ENCODE measurements at regions of chr11 and their contacts with region 1.

Region 1: GRCh38 chr11:19240420-19241259 is at the start of gene E2F8:
- DNase-seq: peak; percentile 95
- H3K4me3 Mint-ChIP-seq: peak within 1 kb of the TSS; percentile 88
- H3K27ac Mint-ChIP-seq: peak within 1 kb of the TSS; percentile 74
- H3K4me1 Mint-ChIP-seq: peaks cover 20% of the 10 kb centered on the region
- H3K27me3 Mint-ChIP-seq: peaks cover 31% of the 10 kb centered on the region
- total RNA-seq, gene E2F8: 16.0 to 16.5 TPM

Region 2: GRCh38 chr11:19116971-19117750 is 123.5 kb before region 1 on chr11 and contains the start of gene ZDHHC13:
- CTCF ChIA-PET with region 1: no interaction called
- POLR2A ChIA-PET with region 1: no interaction called
- intact Hi-C with region 1: loop called (anchors 1 kb)
- DNase-seq: peak; percentile 98
- H3K4me3 Mint-ChIP-seq: peak within 1 kb of the TSS; percentile 89
- H3K27ac Mint-ChIP-seq: peak within 1 kb of the TSS; percentile 67
- H3K4me1 Mint-ChIP-seq: peaks cover 45% of the 10 kb centered on the region
- H3K27me3 Mint-ChIP-seq: no peaks in the 10 kb centered on the region
- total RNA-seq, gene ZDHHC13: 25.4 to 26.8 TPM

Region 3: GRCh38 chr11:19187114-19187832 is 53.4 kb before region 1 on chr11:
- CTCF ChIA-PET with region 1: no interaction called
- POLR2A ChIA-PET with region 1: no interaction called
- intact Hi-C with region 1: no loop called
- DNase-seq: no peak
- H3K4me3 Mint-ChIP-seq: no peak overlapping the region
- H3K27ac Mint-ChIP-seq: no peak overlapping the region
- H3K4me1 Mint-ChIP-seq: no peaks in the 10 kb centered on the region
- H3K27me3 Mint-ChIP-seq: no peaks in the 10 kb centered on the region

Region 4: GRCh38 chr11:19259487-19260345 is 19.1 kb after region 1 on chr11:
- CTCF ChIA-PET with region 1: interaction called, 5 read pairs
- POLR2A ChIA-PET with region 1: no interaction called
- intact Hi-C with region 1: loop called (anchors 1 kb)
- DNase-seq: peak; percentile 76
- H3K4me3 Mint-ChIP-seq: no peak overlapping the region
- H3K27ac Mint-ChIP-seq: no peak overlapping the region
- H3K4me1 Mint-ChIP-seq: no peaks in the 10 kb centered on the region
- H3K27me3 Mint-ChIP-seq: no peaks in the 10 kb centered on the region

Region 5: DNA sequence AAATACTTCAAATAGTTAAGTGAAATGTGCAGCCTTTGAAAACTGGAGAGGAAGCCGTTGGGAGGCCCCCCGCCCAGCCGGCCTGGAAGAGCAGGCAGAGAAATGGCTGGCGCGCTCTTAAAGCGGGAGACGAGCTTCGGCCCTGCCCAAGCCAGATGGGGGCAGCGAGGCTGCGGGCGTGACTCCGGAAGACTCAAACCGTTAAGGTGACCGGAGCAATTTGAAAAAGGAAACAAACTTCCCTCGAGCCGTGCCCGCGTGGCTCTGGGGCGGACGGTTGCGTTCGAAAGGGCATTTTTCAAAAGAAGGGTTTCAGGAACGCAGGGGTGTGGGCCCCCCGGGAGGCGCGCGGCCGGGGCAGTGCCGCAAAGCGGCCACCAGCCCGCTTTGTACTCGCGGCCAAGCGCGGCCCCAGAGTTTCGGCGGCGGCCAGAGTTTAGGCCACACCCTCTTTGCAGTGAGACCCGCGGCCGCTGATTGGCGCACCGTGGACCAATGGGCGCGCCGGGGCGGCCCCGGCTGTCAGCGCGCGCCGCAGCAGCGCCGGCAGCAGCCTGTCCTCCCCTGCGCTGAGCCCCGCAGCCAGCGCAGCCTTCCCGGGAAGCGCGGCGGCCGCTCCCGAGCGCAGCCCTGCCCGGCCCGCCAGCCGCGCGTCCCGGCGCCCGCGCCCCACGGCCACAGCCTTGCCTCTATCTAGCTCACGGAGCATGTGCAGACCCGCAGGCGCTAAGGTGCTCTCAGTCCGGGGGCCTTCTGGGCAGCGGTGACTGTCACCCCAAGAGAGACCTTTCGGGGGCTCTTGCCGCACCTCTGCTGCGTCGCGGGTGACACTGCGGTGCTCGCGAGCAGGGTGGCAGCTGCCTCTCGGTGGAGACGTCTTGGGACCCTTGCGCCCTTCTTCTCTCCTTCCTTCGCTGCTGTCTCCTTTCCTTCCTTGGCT is 471.9 kb after region 1 on chr11 and contains the start of gene NAV2:
- CTCF ChIA-PET with region 1: no interaction called
- POLR2A ChIA-PET with region 1: no interaction called
- intact Hi-C with region 1: loop called (anchors 2 kb)
- DNase-seq: peak; percentile 85
- H3K4me3 Mint-ChIP-seq: peak within 1 kb of the TSS; percentile 81
- H3K27ac Mint-ChIP-seq: peak within 1 kb of the TSS; percentile 78
- H3K4me1 Mint-ChIP-seq: peaks cover 23% of the 10 kb centered on the region
- H3K27me3 Mint-ChIP-seq: peaks cover 16% of the 10 kb centered on the region
- total RNA-seq, gene NAV2: 0.75 to 0.86 TPM

Measured in activated CD4-positive, alpha-beta memory T cell treated with anti-CD3 and anti-CD28 coated beads for 36 hours (primary cell).